SK-N-SH (cell line): ENCODE measurements at regions of chr1 and their contacts with region 1.

Region 1: DNA sequence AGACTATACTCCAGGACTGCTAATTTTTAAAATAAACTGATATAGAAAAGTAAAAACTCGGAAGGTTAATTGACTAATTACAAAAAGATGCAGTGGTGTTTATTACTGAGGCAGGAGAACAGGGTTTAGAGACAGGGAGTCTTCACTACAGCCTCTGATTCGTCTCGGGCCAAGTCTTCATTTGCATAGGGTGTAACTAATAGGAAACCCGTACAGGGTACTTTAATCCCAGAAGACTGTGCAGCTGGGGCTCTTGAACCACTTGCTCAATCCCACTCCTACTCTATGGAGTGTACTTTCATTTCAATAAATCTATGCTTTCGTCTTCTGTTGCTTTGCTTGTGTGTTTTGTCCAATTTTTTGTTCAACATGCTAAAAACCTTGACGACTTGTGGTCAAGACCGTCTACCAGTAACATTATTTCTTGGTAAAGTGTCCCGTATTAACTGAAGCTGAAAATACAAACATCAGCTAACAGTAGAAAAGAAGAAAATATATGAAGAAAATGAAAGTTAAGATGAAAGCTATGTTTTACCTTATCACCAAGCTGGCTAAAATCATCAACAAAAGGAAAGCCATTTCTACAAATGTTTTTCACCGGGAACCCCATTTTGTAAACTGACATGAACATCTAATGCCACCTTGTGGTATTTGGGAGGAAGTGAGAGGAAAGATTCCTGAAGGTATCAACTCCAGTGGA is 8.0 kb downstream of the SDHB start:
- DNase-seq: peak; percentile 58
- H3K4me3 ChIP-seq: peak overlapping the region in 1 of 2 experiments; percentile 0; a peak in 1 of 4 replicates
- H3K27ac ChIP-seq: no peak overlapping the region
- H3K4me1 ChIP-seq: peaks cover 0 to 3% of the 10 kb centered on the region in 2 experiments; a peak in 1 of 4 replicates
- H3K27me3 ChIP-seq: no peaks in the 10 kb centered on the region
- CTCF ChIP-seq: peak; percentile 82
- EP300 ChIP-seq: no peak
- RAD21 ChIP-seq: peak; percentile 89

Region 2: GRCh38 chr1:16984717-16985116 is 61.1 kb before region 1 on chr1:
- CTCF ChIA-PET with region 1: interaction called, 12 read pairs
- POLR2A ChIA-PET with region 1: no interaction called
- DNase-seq: peak; percentile 76
- H3K4me3 ChIP-seq: no peak overlapping the region
- H3K27ac ChIP-seq: peak overlapping the region; percentile 64 to 79
- H3K4me1 ChIP-seq: peaks cover 13 to 14% of the 10 kb centered on the region in 2 experiments; a peak in 2 of 4 replicates
- H3K27me3 ChIP-seq: no peaks in the 10 kb centered on the region
- CTCF ChIP-seq: no peak
- EP300 ChIP-seq: peak; percentile 25 to 62; a peak in 2 of 4 replicates
- RAD21 ChIP-seq: no peak

Region 3: GRCh38 chr1:17011439-17012307 is 34.1 kb before region 1 on chr1 and contains the start of gene ATP13A2:
- CTCF ChIA-PET with region 1: interaction called, 16 read pairs
- POLR2A ChIA-PET with region 1: interaction called, 3 read pairs
- DNase-seq: peak; percentile 94
- H3K4me3 ChIP-seq: peak within 1 kb of the TSS; percentile 79 to 92
- H3K27ac ChIP-seq: peak within 1 kb of the TSS in 1 of 2 experiments; percentile 36; a peak in 1 of 4 replicates
- H3K4me1 ChIP-seq: peaks cover 12 to 22% of the 10 kb centered on the region in 2 experiments; a peak in 2 of 4 replicates
- H3K27me3 ChIP-seq: no peaks in the 10 kb centered on the region
- CTCF ChIP-seq: no peak
- EP300 ChIP-seq: no peak
- RAD21 ChIP-seq: no peak
- polyA plus RNA-seq, gene ATP13A2: 15.9 and 29.3 TPM in 2 replicates

Region 4: DNA sequence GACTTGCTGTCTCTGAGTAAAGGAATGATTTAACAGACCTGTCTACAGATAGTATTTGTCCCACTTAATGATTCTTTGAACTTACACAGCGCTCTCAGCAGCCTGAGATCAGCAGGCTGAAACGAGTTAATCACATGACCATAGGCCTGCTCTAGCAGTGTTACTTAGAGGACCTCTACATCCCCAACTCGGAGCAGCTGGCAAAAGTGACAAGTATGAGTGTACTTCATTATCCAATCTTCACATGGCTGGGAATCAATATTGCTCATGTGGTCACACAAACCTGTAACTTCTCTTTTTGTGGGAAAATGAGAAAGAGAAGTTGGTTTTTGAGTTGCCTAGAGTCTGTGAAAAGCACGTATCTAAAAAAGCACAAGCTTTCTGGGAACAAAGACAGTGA is 22.7 kb before region 1 on chr1:
- CTCF ChIA-PET with region 1: interaction called, 10 read pairs
- POLR2A ChIA-PET with region 1: no interaction called
- DNase-seq: no peak
- H3K4me3 ChIP-seq: no peak overlapping the region
- H3K27ac ChIP-seq: no peak overlapping the region
- H3K4me1 ChIP-seq: no peaks in the 10 kb centered on the region
- H3K27me3 ChIP-seq: no peaks in the 10 kb centered on the region
- CTCF ChIP-seq: no peak
- EP300 ChIP-seq: no peak
- RAD21 ChIP-seq: no peak

Region 5: GRCh38 chr1:17028662-17029188 is 17.1 kb before region 1 on chr1:
- CTCF ChIA-PET with region 1: interaction called, 27 read pairs
- POLR2A ChIA-PET with region 1: no interaction called
- DNase-seq: no peak
- H3K4me3 ChIP-seq: no peak overlapping the region
- H3K27ac ChIP-seq: no peak overlapping the region
- H3K4me1 ChIP-seq: peaks cover 0 to 20% of the 10 kb centered on the region in 2 experiments; a peak in 3 of 4 replicates
- H3K27me3 ChIP-seq: no peaks in the 10 kb centered on the region
- CTCF ChIP-seq: no peak
- EP300 ChIP-seq: no peak
- RAD21 ChIP-seq: no peak

Region 6: DNA sequence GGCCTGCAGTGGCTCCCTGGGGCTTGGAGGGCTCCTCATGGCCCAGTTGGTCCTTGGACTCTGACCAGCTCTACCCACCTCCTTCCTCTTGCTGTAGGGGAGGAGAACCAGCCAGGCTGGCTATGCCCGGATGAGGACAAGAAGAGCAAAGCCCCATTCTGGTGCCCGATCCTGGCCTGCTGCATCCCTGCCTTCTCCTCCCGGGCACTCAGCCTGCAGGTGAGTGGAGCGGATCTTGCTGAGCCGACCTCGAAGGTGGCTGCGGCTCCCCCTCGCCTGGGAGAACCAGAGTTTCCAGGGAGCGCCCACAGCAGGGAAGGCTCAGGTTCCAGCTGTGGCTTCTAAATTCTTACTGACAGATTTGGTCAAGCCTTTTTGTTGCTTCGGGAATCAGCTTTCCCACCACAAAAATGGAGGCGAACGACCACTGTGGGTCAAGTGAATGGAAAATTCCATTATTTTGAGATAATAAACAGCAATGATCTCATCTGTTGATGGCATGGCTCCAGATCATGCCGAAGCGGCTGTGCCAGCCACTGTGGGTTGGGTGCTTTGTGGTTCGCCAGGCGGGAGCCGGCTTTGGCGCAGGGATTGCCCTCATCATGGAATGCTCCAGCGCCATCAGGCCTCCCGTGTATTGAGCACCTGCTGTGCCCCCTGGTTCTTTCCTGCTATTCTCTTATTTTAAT is 602.8 kb after region 1 on chr1:
- CTCF ChIA-PET with region 1: no interaction called
- POLR2A ChIA-PET with region 1: no interaction called
- DNase-seq: no peak
- H3K4me3 ChIP-seq: no peak overlapping the region
- H3K27ac ChIP-seq: no peak overlapping the region
- H3K4me1 ChIP-seq: peaks cover 0 to 11% of the 10 kb centered on the region in 2 experiments; a peak in 1 of 4 replicates
- H3K27me3 ChIP-seq: no peaks in the 10 kb centered on the region
- CTCF ChIP-seq: no peak
- EP300 ChIP-seq: no peak
- RAD21 ChIP-seq: no peak